ENCODE measurements at regions of chr10 and their contacts with region 1.

Region 1: DNA sequence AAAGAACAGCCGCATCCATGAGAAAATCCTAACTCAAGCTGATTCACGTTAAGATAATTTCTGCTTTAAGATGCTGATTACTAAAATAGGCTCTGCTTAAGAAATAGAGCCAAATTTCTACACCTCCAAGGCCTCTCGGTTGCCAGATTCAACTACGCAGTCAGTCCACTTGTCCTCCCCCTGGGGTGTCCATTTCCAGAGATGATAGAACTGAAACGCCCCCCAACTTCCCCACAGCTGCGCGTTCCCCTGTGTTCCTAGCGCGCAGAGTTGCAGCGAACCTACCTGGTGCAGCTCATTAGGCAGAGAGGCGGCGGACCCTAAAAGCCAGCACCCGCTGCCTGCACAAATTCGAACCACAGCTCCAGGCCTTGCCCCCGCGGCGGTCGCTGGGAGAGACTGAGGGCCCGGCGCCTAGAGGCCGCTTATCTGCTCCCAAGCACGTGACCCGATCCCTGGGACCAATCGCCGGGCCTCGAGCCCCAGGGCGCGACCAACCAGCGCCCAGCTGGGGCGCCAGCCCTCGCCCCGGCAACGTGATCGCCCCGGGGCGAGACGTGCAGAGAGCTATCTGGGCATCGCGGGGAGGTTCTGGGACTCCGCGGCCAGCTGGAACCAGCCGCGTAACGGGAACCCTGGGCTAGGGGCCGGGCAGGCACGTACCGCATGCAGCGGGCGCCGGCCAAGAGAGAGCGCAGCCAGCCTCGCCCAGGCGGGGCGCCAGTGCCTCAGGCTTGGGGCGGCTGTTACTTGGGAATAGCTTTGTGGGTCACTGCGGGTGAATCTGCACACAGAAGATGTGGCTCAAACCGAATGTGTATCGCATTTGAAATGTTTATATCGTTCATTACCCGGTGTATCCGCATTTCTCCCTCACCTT is at the start of gene PPP1R3C:
- DNase-seq: peak; percentile 88 to 90
- ATAC-seq: peak; percentile 90 to 98 (median 95)
- H3K4me3 ChIP-seq: peak within 1 kb of the TSS; percentile 46 to 86 (median 72)
- H3K27ac ChIP-seq: peak within 1 kb of the TSS; percentile 50 to 88 (median 84)
- H3K4me1 ChIP-seq: peaks cover 0 to 40% (median 15%) of the 10 kb centered on the region in 9 donors
- H3K27me3 ChIP-seq: peaks cover 0 to 31% (median 0%) of the 10 kb centered on the region in 7 donors
- CTCF ChIP-seq: peak in 6 of 9 donors; percentile 32 to 55 (median 40)
- total RNA-seq, gene PPP1R3C: 121 to 315 (median 190) TPM

Region 2: GRCh38 chr10:91298224-91298871 is 334.6 kb before region 1 on chr10:
- intact Hi-C with region 1: loop called in 4 of 10 experiments (anchors 2 to 10 kb)
- DNase-seq: peak; percentile 68 to 74
- ATAC-seq: peak; percentile 84 to 92 (median 88)
- H3K4me3 ChIP-seq: peak overlapping the region in 9 of 10 donors; percentile 11 to 58 (median 49)
- H3K27ac ChIP-seq: peak overlapping the region in 1 of 10 donors; percentile 25
- H3K4me1 ChIP-seq: peaks cover 0 to 12% (median 6%) of the 10 kb centered on the region in 9 donors
- H3K27me3 ChIP-seq: peaks cover 0 to 6% (median 0%) of the 10 kb centered on the region in 7 donors
- CTCF ChIP-seq: peak; percentile 89 to 95 (median 92)

Region 3: GRCh38 chr10:91487911-91488582 is 144.9 kb before region 1 on chr10:
- intact Hi-C with region 1: loop called in 8 of 10 experiments (anchors 1 to 5 kb)
- DNase-seq: no peak
- ATAC-seq: no peak
- H3K4me3 ChIP-seq: no peak overlapping the region
- H3K27ac ChIP-seq: no peak overlapping the region
- H3K4me1 ChIP-seq: no peaks in the 10 kb centered on the region
- H3K27me3 ChIP-seq: no peaks in the 10 kb centered on the region
- CTCF ChIP-seq: no peak

Region 4: DNA sequence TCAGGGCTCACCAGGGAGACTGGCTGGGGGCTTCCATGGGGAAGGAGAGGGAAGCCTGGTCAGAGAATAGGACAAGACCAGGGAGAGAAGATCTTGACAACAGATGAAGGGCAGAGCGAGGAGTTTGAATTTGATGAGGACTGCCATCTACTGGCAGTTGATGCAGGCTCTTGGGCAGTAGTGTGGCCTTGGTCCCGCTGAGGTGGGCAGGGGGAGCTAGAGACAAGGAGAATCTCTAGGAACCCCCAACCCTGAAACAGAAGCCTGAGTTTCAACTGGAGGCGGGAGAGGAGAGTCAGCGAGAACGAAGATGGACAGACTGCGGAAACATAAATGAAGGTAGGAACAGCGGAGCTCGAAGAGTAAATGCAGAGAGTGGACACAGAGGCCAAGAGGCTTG is 81.1 kb before region 1 on chr10:
- intact Hi-C with region 1: loop called (anchors 1 to 5 kb)
- DNase-seq: peak; percentile 38 to 62
- ATAC-seq: peak; percentile 75 to 93 (median 86)
- H3K4me3 ChIP-seq: peak overlapping the region in 8 of 10 donors; percentile 3 to 44 (median 32)
- H3K27ac ChIP-seq: peak overlapping the region in 5 of 10 donors; percentile 23 to 55 (median 42)
- H3K4me1 ChIP-seq: peaks cover 0 to 24% (median 3%) of the 10 kb centered on the region in 9 donors
- H3K27me3 ChIP-seq: no peaks in the 10 kb centered on the region
- CTCF ChIP-seq: peak in 8 of 9 donors; percentile 36 to 84 (median 73)

Region 5: DNA sequence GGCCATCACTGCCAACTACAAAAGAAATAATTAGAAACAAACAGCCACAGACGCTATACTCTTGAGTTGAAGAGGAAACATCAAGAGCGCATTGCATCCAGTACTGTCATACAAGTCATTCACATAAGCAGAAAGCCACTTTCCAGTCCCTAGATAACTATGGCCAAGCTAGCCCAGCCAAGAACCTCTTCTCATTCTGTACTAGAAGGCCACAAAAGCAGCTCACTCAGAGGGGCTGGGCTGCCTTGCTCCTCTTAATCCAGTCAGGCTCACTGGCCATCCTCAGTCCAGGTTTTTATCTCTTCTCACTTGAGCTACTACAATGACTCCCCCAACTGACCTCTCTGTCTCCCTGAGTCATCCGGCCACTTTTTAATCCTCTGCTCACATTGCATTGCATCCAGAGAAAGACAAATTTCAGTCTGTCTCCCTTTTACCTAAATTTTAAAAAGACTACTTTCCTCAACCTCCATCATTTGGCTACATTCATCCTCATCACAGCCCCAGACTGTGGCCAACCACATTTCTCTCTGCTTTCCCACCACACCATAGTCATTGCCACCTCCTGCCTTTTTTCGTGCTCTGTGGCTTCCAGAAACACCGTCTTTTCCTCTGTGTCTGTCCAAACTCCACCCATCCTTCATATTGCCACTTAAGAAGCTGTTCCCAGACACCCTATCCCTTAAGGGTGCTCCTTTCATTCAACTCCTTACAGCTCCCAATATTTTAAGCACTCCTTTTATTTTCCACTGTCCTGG is 25.1 kb before region 1 on chr10:
- intact Hi-C with region 1: loop called in 1 of 10 experiments (anchors 1 kb)
- DNase-seq: no peak
- ATAC-seq: peak; percentile 21 to 83 (median 68)
- H3K4me3 ChIP-seq: peak overlapping the region in 1 of 10 donors; percentile 3
- H3K27ac ChIP-seq: peak overlapping the region; percentile 77 to 96 (median 88)
- H3K4me1 ChIP-seq: peaks cover 0 to 65% (median 44%) of the 10 kb centered on the region in 9 donors
- H3K27me3 ChIP-seq: no peaks in the 10 kb centered on the region
- CTCF ChIP-seq: no peak

Region 6: DNA sequence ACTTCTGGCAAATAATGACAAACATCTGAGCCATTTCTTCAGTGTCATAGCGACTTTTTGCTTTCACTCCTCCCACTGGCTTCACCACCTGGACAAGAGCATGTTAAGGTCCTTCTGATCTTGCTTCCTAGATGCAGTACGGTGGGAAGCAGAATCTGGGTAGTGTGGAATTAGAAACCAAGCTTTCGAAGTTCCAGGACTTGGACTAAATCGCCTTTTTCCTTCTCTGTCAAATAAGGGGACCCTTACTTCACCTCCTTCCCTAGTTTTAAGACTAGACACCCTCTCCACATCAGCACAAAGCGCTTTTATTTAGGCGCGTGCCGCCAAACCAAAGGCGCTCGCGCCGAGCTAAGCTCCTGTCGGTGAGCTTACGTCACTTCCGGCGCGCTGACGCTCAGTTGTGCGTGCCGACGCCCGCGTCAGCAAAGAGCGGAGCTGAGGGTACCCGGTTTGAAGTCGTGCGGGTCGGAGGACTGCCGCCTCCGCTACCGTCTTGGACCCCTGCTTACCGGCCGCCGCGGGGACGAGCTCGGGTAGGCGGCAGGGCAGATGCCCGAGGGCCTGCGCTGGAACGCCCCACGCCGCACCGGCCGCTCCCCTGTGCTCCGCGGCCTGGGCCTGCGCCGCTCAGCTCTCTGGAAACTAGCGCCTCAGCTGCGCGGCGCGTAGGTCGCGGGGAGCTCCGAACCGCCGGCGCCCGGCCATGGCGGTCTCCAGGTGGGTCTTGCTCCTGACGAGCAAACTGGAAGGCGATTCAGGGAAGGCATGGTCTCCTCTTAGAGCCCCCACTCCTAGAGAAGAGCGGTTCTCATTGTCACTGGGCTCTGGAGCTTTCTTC is 290.7 kb after region 1 on chr10 and contains the start of gene BTAF1:
- intact Hi-C with region 1: loop called in 1 of 10 experiments (anchors 10 kb)
- DNase-seq: peak; percentile 90 to 94
- ATAC-seq: peak; percentile 98 to 100 (median 100)
- H3K4me3 ChIP-seq: peak within 1 kb of the TSS; percentile 73 to 95 (median 86)
- H3K27ac ChIP-seq: peak within 1 kb of the TSS; percentile 72 to 98 (median 97)
- H3K4me1 ChIP-seq: peaks cover 4 to 47% (median 31%) of the 10 kb centered on the region in 9 donors
- H3K27me3 ChIP-seq: peaks cover 0 to 6% (median 0%) of the 10 kb centered on the region in 7 donors
- CTCF ChIP-seq: no peak
- total RNA-seq, gene BTAF1: 10.9 to 14.7 (median 12.4) TPM

Region 7: GRCh38 chr10:91957091-91957490 is 324.2 kb after region 1 on chr10:
- intact Hi-C with region 1: no loop called
- DNase-seq: no peak
- ATAC-seq: no peak
- H3K4me3 ChIP-seq: no peak overlapping the region
- H3K27ac ChIP-seq: no peak overlapping the region
- H3K4me1 ChIP-seq: no peaks in the 10 kb centered on the region
- H3K27me3 ChIP-seq: no peaks in the 10 kb centered on the region
- CTCF ChIP-seq: no peak